MCF 10A (cell line): ENCODE measurements at regions of chr10 and their contacts with region 1.

Region 1: GRCh38 chr10:27360581-27361172 is 120.1 kb upstream of the ACBD5 start:
- DNase-seq: peak; percentile 88
- H3K4me3 Mint-ChIP-seq: no peak overlapping the region
- H3K27ac Mint-ChIP-seq: no peak overlapping the region
- H3K4me1 Mint-ChIP-seq: peaks cover 6% of the 10 kb centered on the region
- H3K27me3 Mint-ChIP-seq: no peaks in the 10 kb centered on the region
- CTCF ChIP-seq: peak; percentile 90

Region 2: GRCh38 chr10:26890956-26891355 is 469.7 kb before region 1 on chr10:
- CTCF ChIA-PET with region 1: no interaction called
- POLR2A ChIA-PET with region 1: no interaction called
- intact Hi-C with region 1: loop called (anchors 1 kb)
- DNase-seq: peak; percentile 70
- H3K4me3 Mint-ChIP-seq: no peak overlapping the region
- H3K27ac Mint-ChIP-seq: no peak overlapping the region
- H3K4me1 Mint-ChIP-seq: no peaks in the 10 kb centered on the region
- H3K27me3 Mint-ChIP-seq: no peaks in the 10 kb centered on the region
- CTCF ChIP-seq: peak; percentile 59

Region 3: DNA sequence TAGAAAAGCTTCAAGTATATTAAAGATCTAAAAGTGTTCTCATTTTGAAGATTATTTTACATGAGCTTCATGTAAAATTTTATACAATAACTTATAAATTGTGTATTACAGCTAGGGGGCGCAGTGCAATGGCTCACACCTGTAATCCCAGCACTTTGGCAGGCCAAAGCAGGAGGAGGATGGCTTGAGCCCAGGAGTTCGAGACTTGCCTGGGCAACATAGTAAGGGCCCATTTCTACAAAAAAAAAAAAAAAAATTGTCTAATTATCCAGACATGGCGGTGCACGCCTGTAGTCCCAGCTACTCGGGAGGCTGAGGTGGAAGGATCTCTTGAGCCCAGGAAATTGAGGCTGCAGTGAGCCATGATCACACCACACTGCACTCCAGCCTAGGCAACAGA is 136.7 kb before region 1 on chr10:
- CTCF ChIA-PET with region 1: interaction called, 21 read pairs
- POLR2A ChIA-PET with region 1: no interaction called
- intact Hi-C with region 1: loop called (anchors 1 kb)
- DNase-seq: peak; percentile 55
- H3K4me3 Mint-ChIP-seq: no peak overlapping the region
- H3K27ac Mint-ChIP-seq: no peak overlapping the region
- H3K4me1 Mint-ChIP-seq: no peaks in the 10 kb centered on the region
- H3K27me3 Mint-ChIP-seq: no peaks in the 10 kb centered on the region
- CTCF ChIP-seq: peak; percentile 31

Region 4: GRCh38 chr10:27241652-27242472 is 118.8 kb before region 1 on chr10:
- CTCF ChIA-PET with region 1: interaction called, 5 read pairs
- POLR2A ChIA-PET with region 1: interaction called, 3 read pairs
- intact Hi-C with region 1: loop called (anchors 5 kb)
- DNase-seq: peak; percentile 95
- H3K4me3 Mint-ChIP-seq: peak overlapping the region; percentile 86
- H3K27ac Mint-ChIP-seq: peak overlapping the region; percentile 94
- H3K4me1 Mint-ChIP-seq: peaks cover 7% of the 10 kb centered on the region
- H3K27me3 Mint-ChIP-seq: no peaks in the 10 kb centered on the region
- CTCF ChIP-seq: no peak